Panc1 (cell line): ENCODE measurements at regions of chr11 and their contacts with region 1.

Region 1: GRCh38 chr11:113435190-113435968 is 39.8 kb downstream of the DRD2 start:
- DNase-seq: no peak
- ATAC-seq: no peak
- H3K4me3 ChIP-seq: no peak overlapping the region
- H3K27ac ChIP-seq: no peak overlapping the region
- H3K4me1 ChIP-seq: no peaks in the 10 kb centered on the region
- H3K27me3 ChIP-seq: no peaks in the 10 kb centered on the region
- CTCF ChIP-seq: no peak

Region 2: DNA sequence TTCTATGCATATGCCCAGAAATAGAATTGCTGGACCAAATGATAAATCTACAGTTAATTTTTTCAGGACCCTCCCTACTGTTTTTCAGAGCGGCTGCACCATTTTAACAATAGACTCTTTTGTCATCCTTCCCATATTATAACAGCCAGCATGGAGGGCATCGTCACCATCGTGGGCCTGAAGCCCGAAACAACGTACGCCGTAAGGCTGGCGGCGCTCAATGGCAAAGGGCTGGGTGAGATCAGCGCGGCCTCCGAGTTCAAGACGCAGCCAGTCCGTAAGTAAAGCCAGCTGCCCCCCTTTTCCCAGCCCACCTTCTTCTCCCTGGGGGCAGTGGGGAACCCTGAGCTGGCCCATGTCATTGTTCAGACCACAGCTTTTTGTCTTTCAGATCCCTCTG is 200.5 kb before region 1 on chr11:
- CTCF ChIA-PET with region 1: no interaction called
- POLR2A ChIA-PET with region 1: no interaction called
- in situ Hi-C with region 1: no loop called
- intact Hi-C with region 1: no loop called
- DNase-seq: no peak
- ATAC-seq: no peak
- H3K4me3 ChIP-seq: no peak overlapping the region
- H3K27ac ChIP-seq: no peak overlapping the region
- H3K4me1 ChIP-seq: no peaks in the 10 kb centered on the region
- H3K27me3 ChIP-seq: peaks cover 14% of the 10 kb centered on the region; the same call in 1 of the 2 replicates
- CTCF ChIP-seq: no peak

Region 3: GRCh38 chr11:113261709-113262475 is 173.5 kb before region 1 on chr11:
- CTCF ChIA-PET with region 1: no interaction called
- POLR2A ChIA-PET with region 1: no interaction called
- in situ Hi-C with region 1: no loop called
- intact Hi-C with region 1: no loop called
- DNase-seq: no peak
- ATAC-seq: no peak
- H3K4me3 ChIP-seq: no peak overlapping the region
- H3K27ac ChIP-seq: no peak overlapping the region
- H3K4me1 ChIP-seq: no peaks in the 10 kb centered on the region
- H3K27me3 ChIP-seq: no peaks in the 10 kb centered on the region
- CTCF ChIP-seq: no peak

Region 4: DNA sequence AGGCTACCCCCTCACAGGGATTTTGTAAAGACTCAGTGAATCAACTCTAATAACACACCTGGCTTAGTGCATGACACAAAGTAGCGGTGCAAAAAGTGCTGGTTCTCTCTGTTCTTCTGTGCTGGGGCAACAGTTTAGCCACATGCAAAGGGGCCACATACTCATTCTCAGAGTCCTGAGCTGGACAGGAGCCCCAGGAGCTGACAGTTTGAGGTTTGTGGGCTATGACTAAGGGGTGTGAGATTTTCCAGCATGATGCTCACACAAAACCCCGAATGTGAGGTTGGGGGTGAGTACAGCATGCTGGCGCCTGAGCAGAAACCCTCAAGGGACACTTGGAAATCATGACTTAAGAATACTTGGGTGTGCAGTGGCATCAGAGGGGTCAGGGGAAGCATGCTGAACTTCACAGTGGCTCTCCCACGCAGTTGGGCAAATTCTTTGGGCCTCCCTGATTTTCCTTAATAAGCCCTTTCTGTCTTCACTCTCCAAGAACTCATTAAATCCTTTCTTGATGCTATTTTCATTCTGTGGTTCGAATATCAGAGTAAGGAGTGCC is 239.7 kb after region 1 on chr11:
- CTCF ChIA-PET with region 1: no interaction called
- POLR2A ChIA-PET with region 1: interaction called, 12 read pairs
- in situ Hi-C with region 1: no loop called
- intact Hi-C with region 1: no loop called
- DNase-seq: no peak
- ATAC-seq: peak; percentile 72
- H3K4me3 ChIP-seq: no peak overlapping the region
- H3K27ac ChIP-seq: peak overlapping the region; percentile 68
- H3K4me1 ChIP-seq: peaks cover 26% of the 10 kb centered on the region
- H3K27me3 ChIP-seq: no peaks in the 10 kb centered on the region
- CTCF ChIP-seq: no peak